ENCODE measurements at regions of chr1 and their contacts with region 1.

Region 1: DNA sequence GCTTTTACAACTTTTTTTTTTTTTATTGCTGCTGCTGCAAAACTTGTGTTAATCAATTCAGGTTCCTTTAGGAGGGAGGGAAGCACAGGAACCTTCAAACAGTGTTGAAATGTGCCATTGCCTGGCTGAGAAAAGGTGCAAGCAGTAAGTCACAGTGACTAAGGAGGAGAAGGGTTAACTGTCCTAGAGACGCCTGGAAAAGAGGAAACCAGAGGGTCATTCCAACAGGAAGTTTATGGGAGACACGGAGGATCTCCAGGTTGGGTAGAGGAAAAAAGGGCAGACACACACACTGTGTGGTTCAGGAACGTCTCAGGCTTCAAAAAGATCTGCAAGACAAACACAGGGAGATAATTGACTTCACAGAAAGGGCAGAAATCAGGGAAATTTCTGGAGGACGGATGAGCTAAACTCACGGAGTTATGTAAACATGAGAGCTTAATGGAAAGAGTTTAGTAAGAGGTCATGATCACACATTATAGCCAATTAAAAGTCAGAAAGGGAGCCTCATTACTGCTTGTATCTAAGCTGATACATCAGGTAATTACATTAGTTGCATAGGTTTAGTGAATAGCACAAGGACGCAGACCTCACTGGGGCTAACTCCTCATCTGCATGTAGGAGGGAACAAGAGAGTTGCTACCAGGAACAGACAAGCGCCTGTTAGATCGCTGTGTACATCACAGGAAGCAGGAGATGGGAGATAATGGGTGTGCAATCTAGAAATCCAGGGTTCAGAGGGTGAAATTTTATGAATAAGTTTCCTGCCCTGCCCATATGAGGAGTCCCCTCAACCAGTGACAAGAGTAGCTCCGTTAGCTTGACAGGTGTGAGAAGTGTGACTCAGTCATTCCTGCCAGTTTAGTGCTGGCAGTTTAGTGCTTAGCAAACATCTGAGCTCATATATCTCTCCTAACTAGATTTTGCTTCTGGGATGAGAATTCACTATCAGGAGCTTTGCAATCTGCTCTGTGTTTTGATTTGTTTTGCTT is 96.6 kb upstream of the TNR start:
- DNase-seq: no peak
- H3K4me3 ChIP-seq: no peak overlapping the region
- H3K27ac ChIP-seq: no peak overlapping the region
- H3K4me1 ChIP-seq: no peaks in the 10 kb centered on the region
- H3K27me3 ChIP-seq: peaks cover 0 to 7% of the 10 kb centered on the region in 2 donors
- CTCF ChIP-seq: no peak
- POLR2A ChIP-seq: no peak

Region 2: GRCh38 chr1:175591083-175591743 is 248.8 kb before region 1 on chr1:
- intact Hi-C with region 1: loop called (anchors 5 kb)
- DNase-seq: no peak
- H3K4me3 ChIP-seq: no peak overlapping the region
- H3K27ac ChIP-seq: no peak overlapping the region
- H3K4me1 ChIP-seq: no peaks in the 10 kb centered on the region
- H3K27me3 ChIP-seq: no peaks in the 10 kb centered on the region
- CTCF ChIP-seq: no peak
- POLR2A ChIP-seq: no peak

Region 3: DNA sequence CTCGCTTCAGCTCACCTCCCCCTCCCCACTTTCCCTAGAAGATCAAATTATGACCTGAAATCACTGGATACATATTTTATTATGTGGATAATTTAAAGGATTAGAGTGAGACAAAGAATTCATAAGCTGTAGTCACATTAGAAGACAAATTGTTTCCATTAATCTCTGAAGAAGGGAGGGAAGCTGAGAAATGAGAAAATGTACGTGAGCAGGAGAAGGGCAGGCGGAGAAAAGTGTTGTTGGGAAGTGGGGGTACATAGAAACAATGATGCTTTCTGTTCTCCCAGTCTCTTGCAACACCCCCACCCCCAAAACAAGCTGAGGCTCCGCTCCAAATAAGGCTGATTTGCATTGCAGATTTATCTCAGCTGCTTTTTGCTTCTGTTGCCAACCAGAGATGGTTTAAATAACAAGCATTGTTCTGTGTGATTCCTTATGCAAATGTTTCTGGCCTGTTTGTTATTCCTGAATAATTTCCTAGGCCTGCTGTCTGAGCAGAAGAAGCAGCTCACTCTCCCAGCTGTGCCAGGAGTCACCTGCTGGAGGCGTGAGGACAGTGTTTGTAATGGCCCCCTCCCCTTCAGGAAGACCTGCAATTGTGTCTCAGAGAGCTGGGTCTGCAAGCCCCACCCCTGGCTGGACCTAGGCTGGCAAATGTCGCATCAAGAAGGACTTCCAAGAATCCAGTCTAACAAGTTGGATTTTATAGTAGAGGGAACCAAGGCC is 25.2 kb after region 1 on chr1:
- intact Hi-C with region 1: no loop called
- DNase-seq: no peak
- H3K4me3 ChIP-seq: no peak overlapping the region
- H3K27ac ChIP-seq: no peak overlapping the region
- H3K4me1 ChIP-seq: no peaks in the 10 kb centered on the region
- H3K27me3 ChIP-seq: no peaks in the 10 kb centered on the region
- CTCF ChIP-seq: no peak
- POLR2A ChIP-seq: no peak